ENCODE measurements at regions of chr7 and their contacts with region 1.

Region 1: GRCh38 chr7:14457568-14458453 is 444.7 kb downstream of the DGKB start:
- DNase-seq: peak; percentile 84
- ATAC-seq: peak; percentile 92
- H3K4me3 ChIP-seq: peak overlapping the region; percentile 60
- H3K27ac ChIP-seq: no peak overlapping the region
- H3K4me1 ChIP-seq: 0 out of 2 replicates have a peak, but pooled peaks cover 4% of the 10 kb centered on the region
- H3K27me3 ChIP-seq: no peaks in the 10 kb centered on the region
- CTCF ChIP-seq: peak; percentile 85

Region 2: DNA sequence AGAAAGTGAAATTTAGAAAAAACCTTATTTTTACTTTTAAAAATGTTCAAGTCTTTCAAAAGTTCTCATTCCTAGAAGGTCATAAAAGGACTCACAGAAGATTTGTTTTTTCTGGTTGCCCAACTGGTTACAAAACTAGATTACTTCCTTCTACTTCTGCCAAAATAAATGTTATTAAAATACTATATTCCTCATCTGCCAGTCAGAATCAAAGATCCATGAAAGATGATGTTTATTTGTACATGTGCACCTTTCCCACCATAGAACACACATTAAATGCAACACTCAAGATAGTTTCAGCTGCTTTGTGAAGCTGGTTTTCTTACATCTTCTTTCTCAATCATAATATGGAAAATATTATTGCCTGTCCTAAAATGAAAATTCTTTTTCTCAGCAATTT is 933.7 kb before region 1 on chr7:
- CTCF ChIA-PET with region 1: no interaction called
- POLR2A ChIA-PET with region 1: no interaction called
- intact Hi-C with region 1: loop called (anchors 1 kb)
- DNase-seq: no peak
- ATAC-seq: peak; percentile 60; the same call in 1 of the 2 replicates
- H3K4me3 ChIP-seq: no peak overlapping the region
- H3K27ac ChIP-seq: no peak overlapping the region
- H3K4me1 ChIP-seq: peaks cover 4% of the 10 kb centered on the region; the same call in 1 of the 2 replicates
- H3K27me3 ChIP-seq: no peaks in the 10 kb centered on the region
- CTCF ChIP-seq: no peak

Region 3: DNA sequence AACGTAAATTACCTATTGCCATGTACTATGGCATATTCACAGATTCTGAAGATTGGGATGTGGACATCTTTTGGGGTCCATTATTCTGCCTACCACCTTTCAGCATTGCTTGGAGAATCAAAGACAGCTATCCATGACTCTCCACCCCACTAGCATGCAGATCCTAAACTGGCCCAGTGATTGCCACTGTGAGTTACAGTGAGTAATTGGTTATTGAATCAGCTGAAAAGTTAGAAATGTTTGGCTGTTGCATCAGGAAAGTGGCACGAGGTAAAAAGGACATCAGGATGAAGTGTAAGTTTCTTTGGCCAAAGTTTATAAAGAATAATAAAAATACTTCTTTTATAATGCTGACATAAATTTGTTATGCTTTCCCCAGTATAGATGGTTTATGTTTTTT is 320.1 kb before region 1 on chr7:
- CTCF ChIA-PET with region 1: no interaction called
- POLR2A ChIA-PET with region 1: no interaction called
- intact Hi-C with region 1: loop called (anchors 10 kb)
- DNase-seq: peak; percentile 33
- ATAC-seq: peak; percentile 64
- H3K4me3 ChIP-seq: no peak overlapping the region
- H3K27ac ChIP-seq: no peak overlapping the region
- H3K4me1 ChIP-seq: peaks cover 8% of the 10 kb centered on the region; the same call in 1 of the 2 replicates
- H3K27me3 ChIP-seq: no peaks in the 10 kb centered on the region
- CTCF ChIP-seq: no peak

Region 4: DNA sequence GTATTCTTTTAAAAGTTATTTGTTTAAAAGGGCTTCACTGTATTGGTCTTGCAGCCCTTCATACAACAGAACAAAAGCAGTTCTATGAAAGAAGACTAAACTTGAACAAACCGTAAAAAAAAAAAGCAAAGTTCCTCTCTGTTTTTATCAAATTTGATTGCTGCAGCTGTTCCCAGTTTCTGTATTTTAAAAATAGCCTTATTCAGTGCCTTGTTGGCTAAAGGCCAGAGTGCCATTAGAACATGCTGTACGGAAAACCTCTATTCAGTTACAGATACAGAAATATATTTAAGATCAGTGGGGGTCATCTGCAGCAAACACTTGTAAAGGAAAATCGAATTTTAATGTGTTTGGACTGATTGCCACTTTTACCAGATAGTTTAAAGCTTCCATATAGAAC is 260.5 kb before region 1 on chr7:
- CTCF ChIA-PET with region 1: no interaction called
- POLR2A ChIA-PET with region 1: no interaction called
- intact Hi-C with region 1: loop called (anchors 10 kb)
- DNase-seq: no peak
- ATAC-seq: no peak
- H3K4me3 ChIP-seq: no peak overlapping the region
- H3K27ac ChIP-seq: no peak overlapping the region
- H3K4me1 ChIP-seq: peaks cover 9% of the 10 kb centered on the region
- H3K27me3 ChIP-seq: no peaks in the 10 kb centered on the region
- CTCF ChIP-seq: no peak

Region 5: DNA sequence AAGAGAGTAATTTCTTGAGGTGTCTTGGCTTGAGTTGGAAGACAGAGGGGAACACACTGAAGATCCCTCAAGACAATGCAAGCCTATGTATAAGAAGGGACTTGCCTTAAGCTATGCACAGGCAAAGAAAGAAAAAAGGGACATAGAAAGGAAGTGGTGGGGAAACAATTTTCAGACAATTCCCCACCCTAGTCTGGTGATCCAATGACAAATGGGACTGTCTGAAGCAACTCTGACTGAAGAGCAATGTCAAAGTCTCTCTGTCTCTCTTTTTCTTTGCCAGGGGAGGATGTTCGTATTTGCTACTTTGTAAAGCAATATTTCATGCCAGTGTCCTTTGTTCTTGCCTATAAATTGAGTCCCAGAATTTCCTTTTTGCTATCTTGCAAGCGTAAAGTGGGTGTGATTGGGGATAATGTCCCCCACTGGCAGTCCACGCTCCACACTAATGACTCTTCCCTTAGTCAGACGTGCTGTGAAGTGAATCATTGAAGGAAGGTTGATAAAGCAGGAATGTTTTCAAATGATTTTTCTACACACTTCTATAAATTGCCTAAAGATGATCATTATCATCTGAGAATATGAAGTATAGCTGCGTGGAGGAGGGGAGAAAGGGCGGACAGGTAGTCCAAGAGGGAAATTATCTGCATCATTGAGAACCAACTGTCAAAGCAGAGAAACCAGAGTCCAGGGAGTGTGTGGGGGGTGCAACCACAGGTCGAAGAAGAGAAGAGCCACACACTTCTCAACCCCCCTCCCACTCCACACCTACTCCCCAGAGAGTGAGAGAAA is 224.5 kb before region 1 on chr7:
- CTCF ChIA-PET with region 1: no interaction called
- POLR2A ChIA-PET with region 1: no interaction called
- intact Hi-C with region 1: loop called (anchors 10 kb)
- DNase-seq: peak; percentile 66
- ATAC-seq: peak; percentile 83
- H3K4me3 ChIP-seq: peak overlapping the region; percentile 33; the same call in 1 of the 2 replicates
- H3K27ac ChIP-seq: 0 out of 2 replicates have a peak overlapping the region, but pooled peaks have one; percentile 6
- H3K4me1 ChIP-seq: peaks cover 22% of the 10 kb centered on the region
- H3K27me3 ChIP-seq: no peaks in the 10 kb centered on the region
- CTCF ChIP-seq: no peak

Region 6: GRCh38 chr7:14288701-14289100 is 169.1 kb before region 1 on chr7:
- CTCF ChIA-PET with region 1: no interaction called
- POLR2A ChIA-PET with region 1: no interaction called
- intact Hi-C with region 1: loop called (anchors 5 kb)
- DNase-seq: no peak
- ATAC-seq: no peak
- H3K4me3 ChIP-seq: no peak overlapping the region
- H3K27ac ChIP-seq: no peak overlapping the region
- H3K4me1 ChIP-seq: no peaks in the 10 kb centered on the region
- H3K27me3 ChIP-seq: no peaks in the 10 kb centered on the region
- CTCF ChIP-seq: no peak